ENCODE measurements at regions of chr2 and their contacts with region 1.

Region 1: DNA sequence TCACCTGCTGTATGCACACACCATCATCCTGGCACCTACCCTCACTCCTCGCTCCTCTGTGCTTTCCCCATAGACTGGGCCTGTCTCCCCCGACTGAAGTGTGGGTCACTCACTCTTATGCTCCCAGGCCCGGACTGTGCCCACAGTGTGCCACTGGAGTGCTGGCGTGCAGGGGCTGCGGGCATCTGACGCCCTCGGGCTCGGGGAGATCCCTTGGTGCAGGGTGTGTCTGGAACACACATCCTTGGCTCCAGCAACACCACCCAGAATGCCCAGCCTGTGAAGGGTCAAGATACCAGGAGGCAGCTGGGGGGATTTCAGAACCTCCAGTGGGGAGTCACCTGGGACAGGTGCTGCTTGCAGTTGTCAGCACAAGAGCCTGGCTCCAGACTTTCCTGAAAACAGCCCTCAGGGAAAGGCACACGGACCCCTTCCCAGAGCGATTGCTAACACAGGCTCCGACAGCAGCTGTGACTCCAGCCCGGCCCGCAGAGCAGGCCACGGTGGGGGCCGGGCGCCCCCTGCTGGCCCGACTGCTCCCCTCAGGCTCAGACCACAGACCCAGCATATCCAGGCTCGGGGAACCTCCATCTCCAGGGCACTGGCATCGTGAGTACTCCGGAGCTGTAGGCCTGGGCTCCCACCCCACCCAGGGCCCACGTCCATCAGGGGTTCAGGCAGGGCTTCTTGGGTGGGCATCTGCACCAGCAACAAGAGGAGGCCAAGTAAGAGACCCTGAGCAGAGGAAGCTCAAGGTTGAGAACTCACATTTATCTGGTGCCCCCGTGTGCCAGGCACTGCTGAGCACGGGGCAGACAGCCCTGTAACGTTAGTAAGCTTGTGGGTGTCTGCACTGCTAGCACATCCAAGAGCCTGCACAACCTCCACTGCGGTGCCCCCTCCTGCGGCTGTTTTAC is 8.6 kb downstream of the HS1BP3 start:
- DNase-seq: peak; percentile 75 to 79
- H3K4me3 ChIP-seq: no peak overlapping the region
- H3K27ac ChIP-seq: peak overlapping the region in 1 of 2 donors; percentile 64
- H3K4me1 ChIP-seq: no peaks in the 10 kb centered on the region
- H3K27me3 ChIP-seq: no peaks in the 10 kb centered on the region
- CTCF ChIP-seq: peak; percentile 80 to 94 (median 91)
- POLR2A ChIP-seq: no peak

Region 2: GRCh38 chr2:20436716-20437470 is 205.4 kb before region 1 on chr2:
- intact Hi-C with region 1: loop called (anchors 1 kb)
- DNase-seq: no peak
- H3K4me3 ChIP-seq: no peak overlapping the region
- H3K27ac ChIP-seq: no peak overlapping the region
- H3K4me1 ChIP-seq: no peaks in the 10 kb centered on the region
- H3K27me3 ChIP-seq: no peaks in the 10 kb centered on the region
- CTCF ChIP-seq: no peak
- POLR2A ChIP-seq: no peak

Region 3: GRCh38 chr2:20446917-20447436 is 195.3 kb before region 1 on chr2 and contains the start of gene RHOB:
- intact Hi-C with region 1: loop called (anchors 1 kb)
- DNase-seq: peak; percentile 98 to 99
- H3K4me3 ChIP-seq: peak within 1 kb of the TSS; percentile 96 to 98 (median 98)
- H3K27ac ChIP-seq: peak within 1 kb of the TSS; percentile 100
- H3K4me1 ChIP-seq: peaks cover 6 to 10% of the 10 kb centered on the region in 2 donors
- H3K27me3 ChIP-seq: no peaks in the 10 kb centered on the region
- CTCF ChIP-seq: peak in 1 of 3 donors; percentile 21
- POLR2A ChIP-seq: peak; percentile 100
- total RNA-seq, gene RHOB: 643 to 1,178 (median 772) TPM

Measured in breast epithelium (tissue), 4 donors.